OCI-LY7 (cell line): ENCODE measurements at regions of chr19 and their contacts with region 1.

Region 1: GRCh38 chr19:19900729-19901444 is at the start of gene ZNF93:
- DNase-seq: peak; percentile 98
- H3K4me3 ChIP-seq: peak within 1 kb of the TSS; percentile 98
- H3K27ac ChIP-seq: peak within 1 kb of the TSS; percentile 53
- H3K4me1 ChIP-seq: peaks cover 12% of the 10 kb centered on the region
- CTCF ChIP-seq: no peak
- total RNA-seq, gene ZNF93: 17.5 and 18.5 TPM in 2 replicates

Region 2: DNA sequence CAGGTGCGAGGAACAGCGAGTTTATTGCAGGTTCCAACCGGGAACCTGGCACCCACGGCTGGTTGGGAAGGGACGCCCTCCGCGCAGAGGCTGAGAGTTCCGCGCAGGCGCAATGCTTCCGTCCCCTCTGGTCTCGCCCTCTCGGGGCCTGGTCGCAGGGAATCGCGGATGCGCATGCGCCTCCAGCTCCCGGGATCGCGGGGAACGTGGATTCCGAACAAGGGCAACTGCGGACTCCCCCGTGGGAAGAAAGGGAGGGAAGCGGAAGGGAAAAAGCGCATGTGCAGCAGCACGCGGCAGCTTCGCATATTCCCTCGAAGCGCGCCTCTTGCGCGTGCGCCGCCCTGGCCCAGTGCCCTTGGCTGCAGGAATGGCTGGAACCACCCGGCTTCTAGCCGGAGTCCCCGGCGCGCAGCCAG is 386.7 kb before region 1 on chr19:
- CTCF ChIA-PET with region 1: no interaction called
- POLR2A ChIA-PET with region 1: no interaction called
- intact Hi-C with region 1: no loop called
- DNase-seq: no peak
- H3K4me3 ChIP-seq: no peak overlapping the region
- H3K27ac ChIP-seq: no peak overlapping the region
- H3K4me1 ChIP-seq: peaks cover 25% of the 10 kb centered on the region
- CTCF ChIP-seq: no peak

Region 3: DNA sequence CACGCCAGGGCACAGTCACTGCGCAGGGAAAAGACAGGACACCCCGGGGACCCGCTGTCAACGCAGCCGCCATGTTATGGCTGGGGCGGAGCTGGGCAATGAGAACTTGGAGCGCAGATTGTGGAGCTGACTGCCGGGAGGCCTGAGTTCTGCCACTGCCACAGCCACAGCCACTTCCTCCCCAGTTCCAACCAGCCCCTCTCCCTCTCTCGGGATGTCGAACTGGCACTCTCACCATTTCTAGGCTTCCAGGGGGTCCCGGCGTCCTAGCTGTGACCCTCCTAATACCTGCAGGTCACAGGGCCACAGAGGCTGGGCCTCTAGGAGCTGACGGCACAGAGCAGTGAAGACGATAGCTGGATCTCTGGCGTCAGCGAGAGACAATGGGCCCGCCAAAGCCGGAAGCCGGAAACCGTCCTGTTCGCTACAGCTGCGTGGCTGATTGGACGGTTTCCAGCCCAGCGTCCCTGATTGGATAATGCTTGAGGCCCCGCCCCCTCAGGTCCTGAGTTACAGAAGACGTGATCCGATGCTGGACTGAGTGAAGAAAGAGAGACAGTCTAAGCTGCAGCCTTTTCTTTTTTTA is 79.4 kb before region 1 on chr19 and contains the start of gene ZNF506:
- CTCF ChIA-PET with region 1: no interaction called
- POLR2A ChIA-PET with region 1: interaction called, 4 read pairs
- intact Hi-C with region 1: loop called (anchors 5 kb)
- DNase-seq: peak; percentile 99
- H3K4me3 ChIP-seq: peak within 1 kb of the TSS; percentile 87
- H3K27ac ChIP-seq: peak within 1 kb of the TSS; percentile 76
- H3K4me1 ChIP-seq: peaks cover 4% of the 10 kb centered on the region
- CTCF ChIP-seq: no peak
- total RNA-seq, gene ZNF506: 22.1 and 36.4 TPM in 2 replicates

Region 4: DNA sequence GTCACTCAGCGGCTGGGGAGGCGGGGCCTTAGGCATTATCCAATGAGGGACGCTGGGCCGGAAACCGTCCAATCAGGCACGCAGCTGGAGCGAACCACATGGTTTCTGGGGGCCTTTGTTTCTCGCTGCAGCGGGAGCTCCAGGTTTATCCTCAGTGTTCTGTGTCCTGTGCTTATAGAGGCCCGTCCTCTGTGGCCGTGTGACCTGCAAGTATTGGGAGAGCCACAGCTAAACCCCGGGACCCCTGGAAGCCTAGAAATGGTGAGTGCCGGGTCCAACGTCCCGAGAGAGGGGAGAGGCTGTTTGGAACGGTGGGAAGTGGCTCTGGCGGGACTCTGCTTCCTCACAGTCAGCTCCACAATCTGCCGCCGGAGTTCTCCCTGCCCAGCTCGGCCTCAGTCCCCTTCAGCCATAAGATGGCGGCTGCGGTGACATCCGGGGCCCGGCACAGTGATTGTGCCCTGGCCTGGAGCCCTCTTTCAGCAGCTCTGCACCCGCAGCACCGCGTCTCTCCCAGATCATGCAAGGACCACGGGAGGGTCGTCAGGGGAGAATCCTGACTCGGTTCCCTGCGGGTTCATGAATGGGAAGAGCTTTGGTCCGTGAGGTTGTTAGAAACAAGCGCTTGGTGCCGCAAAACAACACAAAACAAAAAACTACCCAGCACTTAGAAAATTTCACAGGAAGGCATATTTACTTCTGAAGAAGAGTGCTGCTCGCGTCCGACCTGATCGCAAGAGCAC is 35.0 kb before region 1 on chr19 and contains the start of gene ZNF253:
- CTCF ChIA-PET with region 1: no interaction called
- POLR2A ChIA-PET with region 1: interaction called, 7 read pairs
- intact Hi-C with region 1: loop called (anchors 5 kb)
- DNase-seq: peak; percentile 98
- H3K4me3 ChIP-seq: peak within 1 kb of the TSS; percentile 93
- H3K27ac ChIP-seq: peak within 1 kb of the TSS; percentile 89
- H3K4me1 ChIP-seq: peaks cover 20% of the 10 kb centered on the region
- CTCF ChIP-seq: no peak
- total RNA-seq, gene ZNF253: 20.5 and 29.9 TPM in 2 replicates